ENCODE measurements at regions of chr7 and their contacts with region 1.

Region 1: DNA sequence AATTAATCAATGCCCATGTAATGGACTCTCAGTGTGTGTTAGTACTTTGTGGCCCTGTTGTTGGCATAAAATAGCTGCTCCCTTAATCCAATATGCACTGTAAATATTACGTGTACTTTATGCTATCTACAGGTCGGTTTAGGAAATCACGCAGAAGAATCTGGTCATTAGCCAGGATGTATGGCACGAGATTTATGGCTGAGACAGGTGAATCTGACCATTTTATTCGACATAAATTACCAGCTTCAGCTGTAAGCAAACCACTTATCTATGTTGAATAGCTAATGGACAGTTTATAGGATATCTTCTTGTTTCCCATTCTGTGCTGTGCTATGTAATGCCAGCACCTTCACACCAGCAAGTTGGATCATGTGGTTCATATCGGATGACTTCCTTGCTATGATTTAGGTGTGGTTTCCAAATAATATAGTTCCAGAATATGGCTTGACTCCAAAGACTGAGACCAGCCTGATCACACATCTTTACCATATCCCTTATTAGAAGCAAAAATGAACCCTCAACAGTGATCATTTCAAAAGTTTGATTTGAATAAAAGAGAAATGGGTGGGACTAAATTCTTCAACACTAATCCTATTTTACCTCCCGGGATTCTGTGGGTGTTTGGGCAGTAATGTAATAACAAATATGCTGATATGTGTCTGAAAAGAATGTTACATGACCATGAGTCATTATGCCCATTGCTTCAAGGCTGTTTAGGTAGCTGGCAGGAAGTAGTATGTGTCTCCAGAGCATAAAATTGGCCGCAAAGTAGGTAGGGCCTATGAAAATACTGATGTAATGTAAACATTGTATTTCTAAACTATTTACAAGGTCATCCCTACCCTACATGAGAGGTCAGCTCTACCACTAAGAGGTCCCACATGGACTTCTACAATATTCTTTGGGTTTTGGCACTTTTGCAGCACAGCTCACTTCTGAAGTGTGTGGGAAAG is 301.6 kb downstream of the AHR start:
- DNase-seq: peak; percentile 95
- ATAC-seq: peak; percentile 81
- H3K4me3 ChIP-seq: peak overlapping the region; percentile 36; the same call in 1 of the 2 replicates
- H3K27ac ChIP-seq: peak overlapping the region; percentile 95
- H3K4me1 ChIP-seq: peaks cover 42% of the 10 kb centered on the region
- H3K27me3 ChIP-seq: no peaks in the 10 kb centered on the region
- CTCF ChIP-seq: no peak

Region 2: GRCh38 chr7:17530741-17531417 is 69.1 kb before region 1 on chr7:
- CTCF ChIA-PET with region 1: no interaction called
- POLR2A ChIA-PET with region 1: no interaction called
- intact Hi-C with region 1: loop called (anchors 1 kb)
- DNase-seq: peak; percentile 36
- ATAC-seq: no peak
- H3K4me3 ChIP-seq: no peak overlapping the region
- H3K27ac ChIP-seq: no peak overlapping the region
- H3K4me1 ChIP-seq: peaks cover 36% of the 10 kb centered on the region
- H3K27me3 ChIP-seq: no peaks in the 10 kb centered on the region
- CTCF ChIP-seq: peak; percentile 70

Region 3: DNA sequence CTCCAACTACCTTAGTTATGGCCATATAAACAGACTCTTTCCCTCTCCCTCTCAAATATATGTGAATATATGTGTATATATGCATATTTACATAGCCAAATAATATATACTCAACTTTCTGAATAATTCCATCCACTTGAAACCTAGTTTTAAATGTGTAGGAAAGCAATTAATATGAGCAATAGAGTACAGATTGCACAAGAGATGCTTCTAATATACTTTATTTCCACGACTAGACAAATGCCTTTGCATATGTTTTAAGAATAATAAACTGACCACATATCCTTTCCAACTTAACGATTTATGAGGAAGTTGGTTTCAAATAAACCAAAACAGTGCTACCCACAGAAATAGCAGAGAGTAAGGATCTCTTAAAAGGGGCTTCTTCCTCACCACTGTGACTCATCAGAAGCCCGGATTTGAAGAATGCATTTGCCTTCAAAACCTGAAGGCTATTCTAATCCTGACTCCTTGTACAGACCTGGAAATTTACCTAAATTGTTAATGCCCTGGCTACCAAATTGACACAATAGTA is 35.3 kb before region 1 on chr7:
- CTCF ChIA-PET with region 1: no interaction called
- POLR2A ChIA-PET with region 1: interaction called, 3 read pairs
- intact Hi-C with region 1: loop called (anchors 1 kb)
- DNase-seq: peak; percentile 64
- ATAC-seq: peak; percentile 73
- H3K4me3 ChIP-seq: no peak overlapping the region
- H3K27ac ChIP-seq: peak overlapping the region; percentile 8
- H3K4me1 ChIP-seq: peaks cover 28% of the 10 kb centered on the region
- H3K27me3 ChIP-seq: no peaks in the 10 kb centered on the region
- CTCF ChIP-seq: no peak

Region 4: GRCh38 chr7:17625043-17625442 is 25.0 kb after region 1 on chr7:
- CTCF ChIA-PET with region 1: no interaction called
- POLR2A ChIA-PET with region 1: no interaction called
- intact Hi-C with region 1: loop called (anchors 2 kb)
- DNase-seq: peak; percentile 80
- ATAC-seq: peak; percentile 90
- H3K4me3 ChIP-seq: peak overlapping the region; percentile 41
- H3K27ac ChIP-seq: peak overlapping the region; percentile 73
- H3K4me1 ChIP-seq: peaks cover 39% of the 10 kb centered on the region
- H3K27me3 ChIP-seq: no peaks in the 10 kb centered on the region
- CTCF ChIP-seq: no peak

Region 5: GRCh38 chr7:17646253-17646956 is 46.4 kb after region 1 on chr7:
- CTCF ChIA-PET with region 1: no interaction called
- POLR2A ChIA-PET with region 1: no interaction called
- intact Hi-C with region 1: loop called (anchors 2 kb)
- DNase-seq: peak; percentile 54
- ATAC-seq: peak; percentile 87
- H3K4me3 ChIP-seq: no peak overlapping the region
- H3K27ac ChIP-seq: no peak overlapping the region
- H3K4me1 ChIP-seq: peaks cover 8% of the 10 kb centered on the region
- H3K27me3 ChIP-seq: no peaks in the 10 kb centered on the region
- CTCF ChIP-seq: peak; percentile 77

Measured in PC-3 (cell line).